Natural killer cell (primary cell): ENCODE measurements at regions of chr6 and their contacts with region 1.

Region 1: GRCh38 chr6:43059168-43060033 is at the starts of genes KLC4 and MRPL2:
- DNase-seq: peak; percentile 97 to 99
- ATAC-seq: peak; percentile 94 to 98 (median 96)
- H3K4me3 ChIP-seq: peak within 1 kb of the TSS; percentile 90
- H3K4me3 Mint-ChIP-seq: peak within 1 kb of the TSS; percentile 96
- H3K27ac ChIP-seq: peak within 1 kb of the TSS; percentile 85
- H3K27ac Mint-ChIP-seq: peak within 1 kb of the TSS; percentile 98 to 99
- H3K4me1 ChIP-seq: peaks cover 20% of the 10 kb centered on the region
- H3K4me1 Mint-ChIP-seq: peaks cover 21 to 34% of the 10 kb centered on the region in 2 donors
- H3K27me3 ChIP-seq: no peaks in the 10 kb centered on the region
- H3K27me3 Mint-ChIP-seq: no peaks in the 10 kb centered on the region
- CTCF ChIP-seq: no peak
- total RNA-seq, gene KLC4: 35.9 to 39.4 (median 37.4) TPM
- total RNA-seq, gene MRPL2: 33.4 to 38.4 (median 33.9) TPM

Region 2: GRCh38 chr6:42407379-42407778 is 652.0 kb before region 1 on chr6:
- intact Hi-C with region 1: no loop called
- DNase-seq: no peak
- ATAC-seq: no peak
- H3K4me3 ChIP-seq: no peak overlapping the region
- H3K4me3 Mint-ChIP-seq: no peak overlapping the region
- H3K27ac ChIP-seq: no peak overlapping the region
- H3K27ac Mint-ChIP-seq: peak overlapping the region; percentile 44 to 46
- H3K4me1 ChIP-seq: peaks cover 30% of the 10 kb centered on the region
- H3K4me1 Mint-ChIP-seq: peaks cover 63 to 68% of the 10 kb centered on the region in 2 donors
- H3K27me3 ChIP-seq: no peaks in the 10 kb centered on the region
- H3K27me3 Mint-ChIP-seq: no peaks in the 10 kb centered on the region
- CTCF ChIP-seq: no peak

Region 3: DNA sequence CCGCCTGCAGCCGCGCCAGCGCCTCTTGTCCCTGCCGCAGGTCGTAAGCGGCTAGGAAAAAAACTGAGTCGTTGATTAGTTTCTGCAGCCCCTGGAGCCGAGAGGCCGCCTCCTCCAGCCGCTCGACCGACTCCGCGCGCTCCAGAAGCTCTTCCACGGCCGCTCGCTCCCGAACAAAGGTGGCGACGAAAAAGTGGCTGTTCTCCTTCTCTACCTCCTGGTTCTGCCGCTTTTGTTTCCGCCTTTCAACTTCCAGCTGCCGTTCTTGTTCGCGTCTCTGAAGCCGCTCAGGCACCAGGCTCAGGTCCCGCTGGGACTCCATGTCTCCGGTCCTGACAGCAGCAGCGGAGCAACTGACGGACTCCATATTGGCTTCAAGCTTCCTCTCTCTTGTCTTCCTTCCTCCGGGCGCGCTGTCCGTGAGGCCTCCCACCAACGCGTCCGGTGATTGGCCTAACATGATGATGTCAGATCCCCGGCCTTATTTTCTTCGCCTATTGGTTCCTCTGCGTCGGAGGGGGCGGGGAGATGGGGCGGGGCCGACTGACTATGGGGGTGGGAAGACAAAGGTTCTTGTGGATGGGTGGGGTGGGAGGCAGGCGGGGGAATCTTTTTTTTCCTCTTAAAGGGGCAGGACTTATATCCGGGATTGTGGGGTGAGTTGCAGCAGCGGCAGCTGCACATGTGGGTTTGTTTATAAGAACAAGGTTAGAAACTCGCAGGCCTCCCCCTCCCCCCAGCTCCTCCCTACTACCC is 313.5 kb before region 1 on chr6 and contains the start of gene TBCC:
- intact Hi-C with region 1: loop called (anchors 1 kb)
- DNase-seq: peak; percentile 86 to 98
- ATAC-seq: peak; percentile 83 to 92 (median 85)
- H3K4me3 ChIP-seq: peak within 1 kb of the TSS; percentile 98
- H3K4me3 Mint-ChIP-seq: peak within 1 kb of the TSS; percentile 100
- H3K27ac ChIP-seq: peak within 1 kb of the TSS; percentile 95
- H3K27ac Mint-ChIP-seq: peak within 1 kb of the TSS; percentile 98 to 100
- H3K4me1 ChIP-seq: peaks cover 38% of the 10 kb centered on the region
- H3K4me1 Mint-ChIP-seq: peaks cover 22 to 23% of the 10 kb centered on the region in 2 donors
- H3K27me3 ChIP-seq: no peaks in the 10 kb centered on the region
- H3K27me3 Mint-ChIP-seq: no peaks in the 10 kb centered on the region
- CTCF ChIP-seq: no peak
- total RNA-seq, gene TBCC: 64.1 to 77.6 (median 65.6) TPM

Region 4: GRCh38 chr6:42978839-42979522 is 80.4 kb before region 1 on chr6 and contains the start of gene PEX6:
- intact Hi-C with region 1: loop called (anchors 2 kb)
- DNase-seq: peak; percentile 78 to 98
- ATAC-seq: peak; percentile 89 to 97 (median 94)
- H3K4me3 ChIP-seq: peak within 1 kb of the TSS; percentile 69
- H3K4me3 Mint-ChIP-seq: peak within 1 kb of the TSS; percentile 94
- H3K27ac ChIP-seq: peak within 1 kb of the TSS; percentile 81
- H3K27ac Mint-ChIP-seq: peak within 1 kb of the TSS; percentile 95 to 98
- H3K4me1 ChIP-seq: peaks cover 32% of the 10 kb centered on the region
- H3K4me1 Mint-ChIP-seq: peaks cover 29 to 31% of the 10 kb centered on the region in 2 donors
- H3K27me3 ChIP-seq: no peaks in the 10 kb centered on the region
- H3K27me3 Mint-ChIP-seq: no peaks in the 10 kb centered on the region
- CTCF ChIP-seq: no peak
- total RNA-seq, gene PEX6: 8.2 to 13.6 (median 9.9) TPM

Region 5: DNA sequence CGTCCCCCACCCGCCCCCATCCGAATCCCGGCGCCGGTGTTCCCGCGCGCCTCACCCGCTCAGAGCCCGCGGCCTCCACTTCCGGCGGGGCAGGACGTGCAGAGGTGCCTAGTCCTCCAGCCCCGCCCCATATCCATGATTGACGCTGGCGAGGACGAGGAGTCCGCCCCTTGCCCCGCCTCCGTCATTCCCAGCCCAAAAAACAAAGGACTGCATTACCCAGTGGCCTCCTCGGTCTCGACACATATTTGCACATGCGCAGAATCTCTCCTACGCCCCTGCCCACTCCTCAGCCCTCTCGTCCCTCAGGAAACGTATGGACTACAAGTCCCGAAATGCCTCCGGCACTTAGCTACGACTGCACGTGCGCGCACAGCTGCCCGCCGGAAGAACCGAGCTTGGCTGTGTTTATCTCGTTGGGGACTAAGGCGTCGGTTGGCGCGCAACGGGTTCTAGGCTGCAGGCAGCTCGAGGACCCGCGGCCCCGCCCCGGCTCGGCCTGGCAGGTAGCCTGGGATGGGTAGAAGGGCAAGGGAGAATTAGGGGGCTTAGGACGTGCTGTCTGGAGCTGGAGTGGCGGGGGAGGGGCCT is 45.5 kb before region 1 on chr6 and contains the starts of genes KLHDC3 and MEA1:
- intact Hi-C with region 1: loop called (anchors 1 kb)
- DNase-seq: peak; percentile 86 to 99
- ATAC-seq: peak; percentile 90 to 97 (median 90)
- H3K4me3 ChIP-seq: peak within 1 kb of the TSS; percentile 78
- H3K4me3 Mint-ChIP-seq: peak within 1 kb of the TSS; percentile 97
- H3K27ac ChIP-seq: peak within 1 kb of the TSS; percentile 56
- H3K27ac Mint-ChIP-seq: peak within 1 kb of the TSS; percentile 87 to 93
- H3K4me1 ChIP-seq: peaks cover 40% of the 10 kb centered on the region
- H3K4me1 Mint-ChIP-seq: peaks cover 38 to 59% of the 10 kb centered on the region in 2 donors
- H3K27me3 ChIP-seq: no peaks in the 10 kb centered on the region
- H3K27me3 Mint-ChIP-seq: no peaks in the 10 kb centered on the region
- CTCF ChIP-seq: no peak
- total RNA-seq, gene KLHDC3: 52.7 to 60.9 (median 53.7) TPM
- total RNA-seq, gene MEA1: 29.6 to 34.3 (median 34.2) TPM

Region 6: GRCh38 chr6:43143235-43144124 is 84.1 kb after region 1 on chr6:
- intact Hi-C with region 1: no loop called
- DNase-seq: peak; percentile 74 to 89
- ATAC-seq: peak; percentile 85 to 98 (median 86)
- H3K4me3 ChIP-seq: no peak overlapping the region
- H3K4me3 Mint-ChIP-seq: no peak overlapping the region
- H3K27ac ChIP-seq: no peak overlapping the region
- H3K27ac Mint-ChIP-seq: peak overlapping the region in 1 of 2 donors; percentile 53
- H3K4me1 ChIP-seq: peaks cover 19% of the 10 kb centered on the region
- H3K4me1 Mint-ChIP-seq: peaks cover 0 to 20% of the 10 kb centered on the region in 2 donors
- H3K27me3 ChIP-seq: no peaks in the 10 kb centered on the region
- H3K27me3 Mint-ChIP-seq: no peaks in the 10 kb centered on the region
- CTCF ChIP-seq: peak; percentile 91

Region 7: DNA sequence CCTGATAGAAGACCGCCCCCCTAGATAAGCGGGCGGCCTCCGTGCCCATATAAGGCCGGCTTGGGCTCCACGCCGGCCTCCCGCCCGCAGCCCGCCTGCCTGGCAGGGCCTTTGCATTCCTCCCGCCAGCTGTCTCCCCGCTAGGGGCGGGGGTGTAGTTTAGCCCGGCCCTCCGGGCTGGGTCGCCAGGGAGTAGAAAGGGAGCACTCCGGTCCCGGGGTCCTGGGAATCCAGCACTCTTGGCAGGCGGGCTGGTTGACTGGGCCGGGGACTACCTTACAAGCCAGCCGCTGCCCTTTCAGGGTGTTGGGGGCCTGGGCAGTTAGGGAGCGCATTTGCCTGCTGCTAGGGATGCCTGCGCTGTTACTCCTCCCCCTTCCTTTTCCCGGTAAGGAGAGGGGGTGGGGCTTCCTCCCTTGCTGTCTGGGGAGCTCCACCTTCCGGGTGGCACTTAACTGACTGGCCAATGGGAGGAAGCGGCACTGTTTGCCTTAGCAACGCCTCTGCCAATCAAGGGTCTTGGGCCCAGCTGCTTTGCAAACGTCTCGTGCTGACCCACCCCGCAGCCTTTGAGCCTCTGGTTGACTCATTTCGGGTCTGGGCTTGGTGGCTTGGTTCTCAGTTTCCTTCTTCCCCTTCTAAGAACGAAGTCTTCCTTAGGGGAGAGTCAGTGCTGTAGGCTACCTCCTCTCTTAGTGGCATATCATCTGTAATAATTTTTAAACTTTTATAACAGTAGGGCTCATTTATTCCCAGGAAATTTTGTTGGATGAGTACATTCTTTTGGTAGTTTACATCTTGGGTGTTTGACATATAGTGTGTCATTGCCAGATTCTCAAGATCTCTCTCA is 115.1 kb after region 1 on chr6:
- intact Hi-C with region 1: loop called (anchors 1 kb)
- DNase-seq: peak; percentile 83 to 97
- ATAC-seq: peak; percentile 61 to 74 (median 67)
- H3K4me3 ChIP-seq: peak overlapping the region; percentile 6
- H3K4me3 Mint-ChIP-seq: peak overlapping the region; percentile 64
- H3K27ac ChIP-seq: peak overlapping the region; percentile 83
- H3K27ac Mint-ChIP-seq: peak overlapping the region; percentile 94 to 96
- H3K4me1 ChIP-seq: peaks cover 50% of the 10 kb centered on the region
- H3K4me1 Mint-ChIP-seq: peaks cover 33 to 52% of the 10 kb centered on the region in 2 donors
- H3K27me3 ChIP-seq: no peaks in the 10 kb centered on the region
- H3K27me3 Mint-ChIP-seq: no peaks in the 10 kb centered on the region
- CTCF ChIP-seq: no peak